Cardiac septum (tissue), 1 donor: ENCODE measurements at regions of chr5 and their contacts with region 1.

Region 1: DNA sequence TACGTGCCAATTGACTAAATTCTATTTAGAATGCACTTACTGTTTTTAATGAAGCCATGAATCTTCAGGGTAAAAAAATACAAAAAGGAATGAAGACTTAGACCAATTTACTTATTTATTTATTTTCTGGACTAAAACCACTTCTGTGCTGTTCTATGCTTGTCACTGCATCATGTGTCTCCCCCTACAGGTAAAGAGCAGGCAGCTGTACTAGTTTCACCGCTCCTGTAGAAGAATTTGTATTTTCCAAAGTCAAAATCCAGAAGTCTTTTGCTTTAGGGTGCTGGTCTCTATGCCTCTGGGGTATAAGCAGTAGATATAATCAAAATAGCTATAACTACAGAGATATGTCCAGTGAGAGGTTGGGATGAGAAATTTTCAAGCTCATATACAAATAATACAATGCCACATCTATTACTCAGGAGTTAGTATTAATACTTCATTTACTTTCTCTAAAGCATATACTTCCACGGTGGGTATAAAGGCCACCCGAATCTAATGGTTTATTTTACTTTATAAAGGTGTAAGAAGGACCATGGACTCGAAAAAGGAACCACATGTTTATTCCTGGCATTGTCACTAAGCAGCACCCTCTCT is 591.5 kb downstream of the RAB3C start:
- DNase-seq: no peak

Region 2: GRCh38 chr5:58886315-58887207 is 287.8 kb before region 1 on chr5:
- intact Hi-C with region 1: loop called (anchors 5 kb)
- DNase-seq: peak; percentile 79

Region 3: DNA sequence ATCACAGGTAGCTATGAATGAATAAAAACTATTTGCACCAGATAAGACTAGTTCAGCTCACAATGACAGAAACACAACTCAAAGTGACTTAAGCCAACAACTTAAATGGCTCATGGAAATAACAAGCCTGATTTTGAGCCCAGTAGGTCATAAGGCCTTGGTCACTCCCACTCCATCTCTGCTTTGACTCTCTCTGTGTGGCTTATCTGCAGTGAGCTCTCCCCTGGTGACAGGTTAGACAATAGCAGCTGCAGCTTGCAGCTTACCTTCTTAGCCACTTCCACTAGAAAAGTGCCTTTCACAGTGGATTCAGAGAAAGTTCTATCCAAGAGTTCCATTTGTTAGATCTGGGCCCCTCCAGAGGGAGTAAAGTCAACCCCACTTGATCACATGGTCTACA is 275.8 kb before region 1 on chr5:
- intact Hi-C with region 1: loop called (anchors 5 kb)
- DNase-seq: no peak

Region 4: DNA sequence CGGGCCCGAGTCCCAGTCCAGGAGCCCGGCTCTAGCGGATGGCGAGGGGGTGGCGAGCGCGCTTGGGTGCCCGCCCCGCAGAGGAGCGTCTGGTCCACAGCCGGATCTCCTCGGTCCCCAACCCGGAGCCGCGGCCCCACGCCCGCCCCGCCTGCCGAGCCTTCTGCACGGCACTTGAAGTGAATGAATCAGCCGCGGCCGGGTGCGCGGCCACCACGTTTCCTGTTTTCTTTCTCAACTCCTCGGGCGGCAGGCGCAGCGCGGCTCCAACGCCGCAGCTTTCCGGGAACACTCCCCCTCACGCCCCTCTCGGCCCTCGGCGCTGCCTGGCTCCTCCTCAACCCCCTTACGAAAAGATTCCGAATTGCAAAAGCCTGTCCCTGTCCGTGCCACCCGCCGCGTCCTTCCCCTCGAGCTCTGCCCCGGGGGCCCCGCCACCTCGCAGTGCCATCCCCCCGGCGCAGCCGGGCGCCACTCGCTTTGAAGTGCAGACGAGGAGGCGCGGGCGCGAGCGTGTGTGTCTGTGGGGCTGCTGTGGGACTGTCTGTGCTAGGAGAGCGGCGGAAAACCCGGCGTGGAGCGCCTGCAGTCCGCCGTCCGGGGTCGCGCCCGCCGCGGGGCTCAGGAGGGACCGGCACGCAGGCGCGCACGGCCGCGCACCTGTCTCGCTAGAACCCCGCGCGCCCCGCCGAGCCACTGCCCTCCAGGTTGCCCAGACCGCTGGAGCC is 134.9 kb before region 1 on chr5:
- intact Hi-C with region 1: loop called (anchors 2 kb)
- DNase-seq: peak; percentile 94